Left lung (tissue), 14 donors: ENCODE measurements at regions of chr2 and their contacts with region 1.

Region 1: DNA sequence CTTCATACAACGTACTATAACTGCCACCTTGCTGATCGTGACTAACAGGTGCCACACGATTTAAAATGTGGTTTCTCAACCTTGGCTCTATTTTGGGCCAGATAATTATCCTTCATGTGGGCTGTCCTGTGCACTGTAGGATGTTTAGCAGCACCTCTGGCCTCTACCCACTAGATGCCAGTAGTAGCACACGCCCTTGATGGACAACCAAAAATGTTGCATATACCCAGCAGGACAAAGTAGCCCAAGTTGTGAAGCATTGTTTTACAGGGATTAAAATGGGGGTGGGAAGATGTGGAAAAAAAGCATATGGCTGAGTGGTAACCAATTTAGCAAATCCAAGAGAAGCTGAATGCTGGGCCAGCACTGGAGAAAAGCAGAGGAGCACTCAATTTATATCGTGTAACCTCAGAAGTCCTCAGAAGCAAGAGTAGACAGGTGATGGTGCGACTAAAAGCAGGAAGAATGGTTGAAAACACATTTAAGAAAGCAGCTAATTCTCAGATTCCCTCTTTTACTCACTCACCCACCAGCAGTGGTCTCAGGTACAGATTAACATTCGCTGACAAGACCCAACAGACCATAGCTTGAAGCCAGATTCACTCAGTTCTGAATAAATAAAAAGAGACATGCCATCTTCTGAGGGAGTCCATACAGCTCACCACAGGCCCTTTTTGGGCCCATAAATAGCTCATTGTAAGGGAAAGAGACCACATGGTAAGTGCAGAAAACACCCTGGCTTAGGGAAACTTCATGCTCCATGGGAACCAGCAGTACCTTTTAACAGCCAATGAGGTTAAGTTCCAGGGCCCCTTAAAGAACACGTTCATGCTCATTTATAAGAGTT is 50.6 kb downstream of the RAPH1 start:
- DNase-seq: peak in 1 of 4 donors; percentile 40
- ATAC-seq: peak; percentile 84
- H3K4me3 ChIP-seq: no peak overlapping the region
- H3K27ac ChIP-seq: no peak overlapping the region
- H3K4me1 ChIP-seq: no peaks in the 10 kb centered on the region
- H3K27me3 ChIP-seq: no peaks in the 10 kb centered on the region
- CTCF ChIP-seq: peak in 1 of 2 donors; percentile 46

Region 2: DNA sequence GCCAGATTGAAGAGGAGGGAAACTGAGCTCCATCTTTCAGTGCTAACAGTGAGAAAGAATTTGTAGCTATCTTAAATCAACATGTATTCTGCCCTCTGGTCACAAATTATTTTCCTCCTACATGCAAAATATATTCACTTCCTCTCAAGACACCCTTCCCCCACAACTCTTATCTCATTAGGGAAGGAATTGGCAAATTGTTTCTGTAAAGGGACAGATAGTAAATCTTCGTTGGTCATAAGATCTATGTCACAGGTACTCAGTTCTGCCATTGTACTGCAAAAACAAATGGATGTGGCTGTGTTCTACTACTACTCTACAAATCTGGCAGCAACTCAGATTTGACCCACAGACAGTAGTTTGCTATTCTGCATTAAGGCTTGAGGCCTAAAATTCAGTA is 298.6 kb before region 1 on chr2:
- intact Hi-C with region 1: no loop called
- DNase-seq: no peak
- ATAC-seq: no peak
- H3K4me3 ChIP-seq: no peak overlapping the region
- H3K27ac ChIP-seq: no peak overlapping the region
- H3K4me1 ChIP-seq: no peaks in the 10 kb centered on the region
- H3K27me3 ChIP-seq: no peaks in the 10 kb centered on the region
- CTCF ChIP-seq: no peak

Region 3: GRCh38 chr2:203814661-203815540 is 330.4 kb after region 1 on chr2:
- intact Hi-C with region 1: loop called in 1 of 2 experiments (anchors 10 kb)
- DNase-seq: peak; percentile 53 to 74 (median 63)
- ATAC-seq: peak; percentile 93
- H3K4me3 ChIP-seq: no peak overlapping the region
- H3K27ac ChIP-seq: no peak overlapping the region
- H3K4me1 ChIP-seq: peaks cover 10 to 41% of the 10 kb centered on the region in 2 donors
- H3K27me3 ChIP-seq: no peaks in the 10 kb centered on the region
- CTCF ChIP-seq: peak; percentile 83 to 85